GM23248 (cell line): ENCODE measurements at regions of chr7 and their contacts with region 1.

Region 1: DNA sequence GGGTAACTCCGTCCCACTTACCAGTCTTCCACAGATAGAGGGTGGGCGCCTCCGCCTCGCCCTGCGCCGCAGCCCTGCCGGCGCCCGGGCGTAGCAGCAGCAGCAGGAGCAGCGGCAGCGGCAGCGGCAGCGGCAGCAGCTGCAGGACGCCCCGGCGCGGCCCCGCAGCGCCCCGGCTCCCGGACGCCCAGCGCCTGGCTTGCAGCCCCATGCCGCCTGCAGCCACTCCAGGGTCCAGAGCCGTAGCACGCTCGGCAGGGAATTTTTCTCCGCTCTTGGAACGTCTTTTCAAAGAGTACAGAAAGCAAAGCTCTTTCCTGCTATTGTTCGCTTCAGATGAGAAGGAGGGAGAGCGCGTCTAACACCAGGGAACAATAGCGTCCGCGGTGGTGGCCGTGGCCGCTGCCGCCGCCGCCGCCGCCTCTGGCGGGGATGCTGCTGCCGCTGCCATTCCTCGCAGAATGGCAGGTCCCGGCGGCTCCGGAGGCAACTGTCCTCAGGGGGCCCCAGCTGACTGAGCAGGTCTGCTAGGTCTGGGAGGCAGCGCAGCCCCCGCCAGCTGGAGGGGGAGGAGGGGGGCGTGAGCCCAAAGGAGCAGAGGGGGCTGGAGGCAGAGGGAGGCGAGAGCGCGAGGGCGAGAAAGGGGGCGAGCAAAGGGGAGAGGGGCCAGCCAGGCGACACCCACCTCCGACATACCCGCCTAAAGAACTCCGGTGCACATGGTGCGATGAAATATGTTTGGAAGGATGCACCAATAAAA is at the start of gene THSD7A:
- DNase-seq: peak; percentile 69
- H3K4me3 ChIP-seq: peak within 1 kb of the TSS; percentile 80
- H3K27ac ChIP-seq: no peak within 1 kb of the TSS
- H3K4me1 ChIP-seq: 0 out of 2 replicates have a peak, but pooled peaks cover 4% of the 10 kb centered on the region
- H3K27me3 ChIP-seq: peaks cover 9% of the 10 kb centered on the region
- total RNA-seq, gene THSD7A: not detected in 2 replicates

Region 2: GRCh38 chr7:10977113-10977512 is 854.8 kb before region 1 on chr7:
- in situ Hi-C with region 1: no loop called
- DNase-seq: no peak
- H3K4me3 ChIP-seq: no peak overlapping the region
- H3K27ac ChIP-seq: no peak overlapping the region
- H3K4me1 ChIP-seq: peaks cover 8% of the 10 kb centered on the region
- H3K27me3 ChIP-seq: no peaks in the 10 kb centered on the region

Region 3: DNA sequence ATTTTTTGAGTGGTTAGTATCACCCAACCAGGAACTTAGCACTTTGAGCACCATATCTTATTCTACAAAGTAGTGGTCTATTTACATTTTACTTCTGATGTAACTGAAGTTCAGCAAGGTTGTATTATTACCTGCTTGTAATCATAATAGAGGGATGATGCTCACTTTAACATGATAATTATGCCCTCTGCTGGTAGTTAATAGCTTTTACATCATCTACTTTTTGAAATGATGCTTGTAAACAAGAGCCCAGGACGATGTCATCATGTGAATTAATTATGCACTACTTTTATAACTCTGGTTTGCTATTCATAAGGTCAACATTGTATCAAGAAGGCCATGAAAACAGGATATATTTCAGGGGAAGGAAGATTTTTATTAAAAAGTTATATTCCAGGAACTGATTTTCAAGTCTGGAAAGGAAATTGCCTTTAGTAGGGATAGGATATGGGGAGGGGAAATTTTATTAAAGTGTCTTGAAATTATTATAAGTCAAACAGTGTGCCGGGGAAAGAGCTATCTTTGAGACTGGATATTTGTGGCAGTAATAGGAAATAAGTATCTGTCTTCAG is 658.3 kb after region 1 on chr7:
- in situ Hi-C with region 1: loop called (anchors 25 kb)
- DNase-seq: peak; percentile 69
- H3K4me3 ChIP-seq: no peak overlapping the region
- H3K27ac ChIP-seq: no peak overlapping the region
- H3K4me1 ChIP-seq: no peaks in the 10 kb centered on the region
- H3K27me3 ChIP-seq: no peaks in the 10 kb centered on the region